ENCODE measurements at regions of chr17 and their contacts with region 1.

Region 1: DNA sequence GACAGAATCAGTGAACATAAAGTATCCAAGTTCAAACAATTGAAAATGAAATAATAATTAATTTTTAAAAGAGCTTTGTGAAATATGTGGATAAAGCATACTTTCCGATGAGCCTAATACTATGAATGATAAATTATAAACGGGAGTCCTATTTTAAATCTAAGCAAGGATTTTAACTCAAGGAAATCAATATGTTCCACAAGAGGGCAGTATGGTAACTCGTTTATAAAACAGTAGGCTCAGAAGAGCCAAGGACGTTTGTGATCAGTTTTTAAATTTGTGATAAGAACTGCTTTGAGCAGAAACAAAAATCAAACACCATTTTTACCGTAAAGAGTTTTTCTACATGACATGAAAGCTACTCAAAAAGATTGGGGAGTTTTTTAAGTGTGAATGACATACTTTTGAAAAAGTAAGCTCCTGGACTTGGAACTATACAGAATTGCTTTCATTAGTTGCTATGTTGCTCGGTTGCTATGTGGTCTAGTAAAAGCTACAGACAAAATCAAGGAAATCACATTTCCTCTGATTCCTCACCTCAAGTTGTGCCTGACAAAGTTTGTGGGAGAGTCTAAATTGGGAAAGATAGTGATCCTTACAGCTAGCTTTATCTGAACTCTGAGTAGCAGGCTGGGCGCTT is 11.8 kb upstream of the TEKT1 start:
- DNase-seq: peak; percentile 42
- H3K4me3 ChIP-seq: no peak overlapping the region
- H3K27ac ChIP-seq: no peak overlapping the region
- H3K4me1 ChIP-seq: no peaks in the 10 kb centered on the region
- H3K27me3 ChIP-seq: no peaks in the 10 kb centered on the region
- CTCF ChIP-seq: peak; percentile 42 to 55

Region 2: GRCh38 chr17:6753006-6753445 is 90.3 kb before region 1 on chr17:
- CTCF ChIA-PET with region 1: no interaction called
- dilution Hi-C with region 1: no loop called
- in situ Hi-C with region 1: no loop called
- intact Hi-C with region 1: loop called (anchors 2 kb)
- DNase-seq: peak; percentile 66
- H3K4me3 ChIP-seq: no peak overlapping the region
- H3K27ac ChIP-seq: peak overlapping the region; percentile 92
- H3K4me1 ChIP-seq: peaks cover 24% of the 10 kb centered on the region
- H3K27me3 ChIP-seq: no peaks in the 10 kb centered on the region
- CTCF ChIP-seq: no peak

Region 3: GRCh38 chr17:6894206-6894528 is 50.8 kb after region 1 on chr17:
- CTCF ChIA-PET with region 1: no interaction called
- dilution Hi-C with region 1: no loop called
- in situ Hi-C with region 1: no loop called
- intact Hi-C with region 1: loop called (anchors 1 kb)
- DNase-seq: no peak
- H3K4me3 ChIP-seq: no peak overlapping the region
- H3K27ac ChIP-seq: no peak overlapping the region
- H3K4me1 ChIP-seq: no peaks in the 10 kb centered on the region
- H3K27me3 ChIP-seq: no peaks in the 10 kb centered on the region
- CTCF ChIP-seq: peak; percentile 37 to 56

Region 4: DNA sequence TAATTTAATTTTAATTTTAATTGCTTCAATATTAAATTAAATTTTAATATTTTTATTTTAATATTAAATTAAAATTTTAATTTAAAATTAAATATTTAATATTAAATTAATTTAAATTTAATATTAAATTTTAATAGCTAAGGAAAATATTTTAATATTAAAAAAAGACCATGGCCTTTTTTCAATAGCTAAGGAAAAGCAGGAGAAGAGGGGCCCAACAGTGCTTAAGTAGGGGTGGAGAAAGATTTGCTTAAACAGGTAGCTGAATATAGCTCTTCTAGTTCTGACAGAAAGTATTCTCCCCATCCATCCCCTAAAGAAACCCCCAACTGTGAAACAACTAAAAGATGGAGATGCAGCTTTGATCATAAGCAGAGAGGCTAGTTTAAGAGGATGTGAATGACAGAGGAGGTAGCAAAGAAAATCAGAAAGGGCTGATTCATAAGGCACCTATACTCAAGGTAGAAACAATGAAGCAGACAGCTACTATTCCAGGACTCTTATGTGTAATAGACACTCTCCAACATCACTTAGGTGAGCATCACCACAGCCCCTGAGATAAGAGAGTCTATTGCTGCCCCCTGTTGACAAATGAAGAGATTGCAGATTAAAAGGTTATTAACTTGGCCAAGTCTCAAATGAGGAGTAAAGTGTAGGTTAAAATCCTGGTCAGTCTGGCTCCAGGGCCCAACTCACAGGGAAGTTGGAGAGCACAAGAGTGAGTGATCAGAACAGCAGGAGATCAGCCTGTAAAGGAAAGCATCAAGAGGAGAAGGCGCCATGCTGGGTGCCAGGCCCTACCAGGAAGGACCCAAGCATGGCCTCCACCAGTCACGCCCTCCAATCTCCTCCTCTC is 161.3 kb after region 1 on chr17:
- CTCF ChIA-PET with region 1: interaction called, 10 read pairs
- dilution Hi-C with region 1: no loop called
- in situ Hi-C with region 1: loop called in 1 of 2 experiments (anchors 5 kb)
- intact Hi-C with region 1: loop called (anchors 1 kb)
- DNase-seq: peak; percentile 69
- H3K4me3 ChIP-seq: no peak overlapping the region
- H3K27ac ChIP-seq: no peak overlapping the region
- H3K4me1 ChIP-seq: no peaks in the 10 kb centered on the region
- H3K27me3 ChIP-seq: no peaks in the 10 kb centered on the region
- CTCF ChIP-seq: peak; percentile 66 to 69

Region 5: DNA sequence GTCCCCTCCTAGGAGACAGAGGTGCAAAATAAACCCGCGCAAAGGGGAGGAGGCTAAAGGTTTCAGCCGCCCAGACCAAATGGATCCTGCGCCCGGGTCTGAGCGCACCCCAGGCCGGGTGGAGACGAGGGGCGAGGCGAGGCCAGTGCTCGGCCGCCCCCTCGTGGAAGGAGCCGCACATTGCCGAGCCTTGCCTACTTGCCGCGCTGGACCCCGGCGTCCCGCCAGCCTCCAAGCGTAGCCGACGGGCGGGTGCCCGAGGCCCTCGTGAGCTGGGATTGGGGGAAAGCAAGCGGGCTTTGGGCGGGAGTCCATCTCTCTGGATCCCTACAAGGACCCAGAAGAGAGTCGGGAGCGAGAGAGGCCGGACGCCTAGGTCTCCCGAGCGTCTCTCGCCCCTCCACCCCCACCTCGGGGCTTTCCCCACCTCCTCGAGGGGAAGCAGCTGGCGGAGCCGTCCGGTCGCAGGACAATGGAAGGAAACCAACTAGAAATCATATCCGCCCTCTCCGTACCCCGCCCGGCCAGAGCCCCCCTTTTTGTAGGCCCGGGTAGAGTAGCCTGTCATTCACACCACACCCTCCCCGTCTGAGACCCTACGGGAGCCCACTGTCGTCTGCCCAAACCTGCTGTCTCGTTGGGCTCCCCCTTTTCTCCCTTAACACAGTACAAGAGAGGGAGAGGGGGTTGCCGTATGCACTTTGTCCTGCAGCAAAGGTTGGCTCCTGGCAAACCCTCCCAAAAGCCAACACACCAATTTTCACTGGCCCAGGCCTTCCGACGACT is 178.8 kb after region 1 on chr17:
- CTCF ChIA-PET with region 1: no interaction called
- dilution Hi-C with region 1: no loop called
- in situ Hi-C with region 1: no loop called
- intact Hi-C with region 1: loop called (anchors 1 kb)
- DNase-seq: no peak
- H3K4me3 ChIP-seq: peak overlapping the region in 2 of 3 experiments; percentile 6 to 33
- H3K27ac ChIP-seq: no peak overlapping the region
- H3K4me1 ChIP-seq: peaks cover 7% of the 10 kb centered on the region
- H3K27me3 ChIP-seq: no peaks in the 10 kb centered on the region
- CTCF ChIP-seq: peak; percentile 70 to 94